ENCODE measurements at regions of chr17 and their contacts with region 1.

Region 1: GRCh38 chr17:50161023-50161910 is 4.5 kb upstream of the SGCA start:
- DNase-seq: peak; percentile 99

Region 2: GRCh38 chr17:50114849-50115357 is 46.4 kb before region 1 on chr17:
- CTCF ChIA-PET with region 1: interaction called, 15 read pairs
- POLR2A ChIA-PET with region 1: interaction called, 15 read pairs
- DNase-seq: peak; percentile 70

Region 3: GRCh38 chr17:50123649-50124349 is 37.5 kb before region 1 on chr17:
- CTCF ChIA-PET with region 1: interaction called, 10 read pairs
- POLR2A ChIA-PET with region 1: interaction called, 11 read pairs
- DNase-seq: peak; percentile 69

Region 4: DNA sequence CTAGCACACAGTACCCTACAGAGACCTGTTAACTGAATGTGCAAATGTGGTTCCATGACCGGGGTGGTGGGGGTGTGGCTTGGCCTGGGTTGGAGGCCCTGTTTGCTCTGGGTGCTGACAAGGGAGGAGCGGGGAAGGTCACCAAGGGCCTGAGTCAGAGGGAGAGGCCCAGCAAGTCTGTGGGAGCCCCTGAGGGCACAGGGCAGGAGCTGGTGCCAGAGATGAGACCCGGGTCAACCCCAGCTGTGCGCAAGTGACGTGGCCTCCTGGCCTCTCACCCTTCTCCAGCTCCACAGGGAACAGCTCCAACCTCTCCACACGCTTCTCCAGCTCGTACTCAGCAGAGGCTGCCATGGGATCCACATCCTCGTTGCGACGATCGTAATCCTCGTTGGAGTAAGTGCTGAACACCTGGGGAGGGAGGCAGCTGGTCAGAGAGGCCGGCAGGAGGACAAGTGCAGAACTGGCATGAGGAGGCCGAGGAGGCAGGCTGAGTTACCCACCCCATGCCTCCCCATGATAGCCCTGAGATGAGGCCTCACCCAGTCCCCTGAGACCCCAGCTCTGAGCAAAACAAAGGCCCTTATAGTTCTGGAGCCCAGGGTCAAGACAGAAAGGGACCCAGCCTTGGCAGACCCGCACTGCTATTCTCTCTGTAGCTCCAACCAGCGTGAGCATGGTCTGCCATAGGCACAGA is 16.3 kb before region 1 on chr17:
- CTCF ChIA-PET with region 1: interaction called, 12 read pairs
- POLR2A ChIA-PET with region 1: interaction called, 25 read pairs
- DNase-seq: no peak

Region 5: GRCh38 chr17:50177983-50178834 is 16.9 kb after region 1 on chr17:
- CTCF ChIA-PET with region 1: interaction called, 13 read pairs
- POLR2A ChIA-PET with region 1: interaction called, 18 read pairs
- DNase-seq: peak; percentile 80

Region 6: DNA sequence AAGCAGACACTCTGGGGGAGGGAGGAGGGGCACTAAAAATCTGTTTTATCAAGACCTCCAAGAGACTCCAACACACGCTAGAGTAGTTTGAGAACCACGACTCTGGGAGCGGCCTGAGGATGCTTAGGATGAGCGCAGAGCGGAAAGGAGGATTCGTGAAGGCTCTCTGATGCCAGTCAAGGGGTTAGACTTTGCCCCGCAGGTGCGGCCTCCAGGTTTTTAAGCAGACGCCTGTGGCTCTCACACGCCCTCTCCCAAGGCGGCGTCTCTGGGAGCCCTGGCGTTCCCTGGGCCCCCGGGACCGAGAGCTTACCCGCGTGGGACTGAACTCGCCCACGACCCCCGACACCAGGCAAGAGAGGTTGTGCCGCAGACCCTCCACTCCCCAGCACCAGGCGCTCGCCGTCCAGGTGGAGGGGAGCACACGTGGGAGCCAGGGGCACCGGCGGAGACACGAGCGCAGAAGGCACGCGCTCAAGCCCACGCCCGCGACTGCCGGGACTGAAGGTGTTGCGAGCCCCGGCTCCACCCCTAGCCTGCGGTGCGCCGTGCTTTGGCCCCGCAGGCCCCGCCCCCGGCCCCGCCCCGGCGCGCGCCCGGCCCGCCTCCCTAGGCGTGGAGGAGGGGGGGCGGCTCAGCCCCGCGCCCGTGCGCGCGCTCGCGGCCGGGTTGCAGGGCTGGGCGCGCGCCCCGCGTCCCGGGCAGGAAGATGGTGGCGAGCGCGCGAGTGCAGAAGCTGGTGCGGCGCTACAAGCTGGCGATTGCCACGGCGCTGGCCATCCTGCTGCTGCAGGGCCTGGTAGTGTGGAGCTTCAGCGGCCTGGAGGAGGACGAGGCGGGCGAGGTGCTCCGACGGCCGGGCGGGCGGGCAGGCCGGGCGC is 184.4 kb after region 1 on chr17 and contains the start of gene XYLT2:
- CTCF ChIA-PET with region 1: no interaction called
- POLR2A ChIA-PET with region 1: no interaction called
- DNase-seq: peak; percentile 98